MCF 10A (cell line): ENCODE measurements at regions of chr17 and their contacts with region 1.

Region 1: DNA sequence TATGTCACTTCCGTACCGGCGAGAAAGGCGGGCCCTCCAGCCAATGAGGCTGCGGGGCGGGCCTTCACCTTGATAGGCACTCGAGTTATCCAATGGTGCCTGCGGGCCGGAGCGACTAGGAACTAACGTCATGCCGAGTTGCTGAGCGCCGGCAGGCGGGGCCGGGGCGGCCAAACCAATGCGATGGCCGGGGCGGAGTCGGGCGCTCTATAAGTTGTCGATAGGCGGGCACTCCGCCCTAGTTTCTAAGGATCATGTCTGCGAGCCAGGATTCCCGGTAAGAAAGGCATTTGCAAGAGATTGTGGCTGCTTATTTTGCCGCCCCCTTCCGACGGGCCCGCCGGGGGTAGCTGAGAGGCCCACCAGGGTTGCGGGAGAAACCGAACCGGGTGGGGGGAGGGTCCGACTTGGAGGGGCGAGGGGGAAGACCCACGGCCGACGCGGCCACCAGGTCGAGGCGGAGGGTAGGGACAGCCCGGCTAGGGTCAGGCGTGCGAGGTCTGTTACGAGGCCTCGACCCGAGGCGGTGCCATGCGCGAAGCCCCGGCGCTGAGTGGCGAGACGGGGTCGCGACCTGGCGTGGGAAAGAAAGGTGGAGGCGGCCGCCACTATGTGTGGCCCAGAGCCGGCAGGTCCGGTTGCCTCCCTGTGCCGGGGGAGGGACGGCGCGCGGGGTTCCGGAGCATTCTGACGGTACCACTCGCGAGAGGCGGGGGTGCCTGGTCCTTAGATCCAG is 6.7 kb upstream of the CD68 start:
- DNase-seq: peak; percentile 99
- H3K4me3 Mint-ChIP-seq: peak overlapping the region; percentile 90
- H3K27ac Mint-ChIP-seq: peak overlapping the region; percentile 99
- H3K4me1 Mint-ChIP-seq: peaks cover 11% of the 10 kb centered on the region
- H3K27me3 Mint-ChIP-seq: no peaks in the 10 kb centered on the region
- CTCF ChIP-seq: no peak

Region 2: GRCh38 chr17:7583253-7584109 is 10.7 kb after region 1 on chr17 and contains the start of gene MPDU1:
- CTCF ChIA-PET with region 1: interaction called, 59 read pairs
- POLR2A ChIA-PET with region 1: interaction called, 294 read pairs
- intact Hi-C with region 1: loop called (anchors 1 kb)
- DNase-seq: peak; percentile 98
- H3K4me3 Mint-ChIP-seq: peak within 1 kb of the TSS; percentile 93
- H3K27ac Mint-ChIP-seq: peak within 1 kb of the TSS; percentile 100
- H3K4me1 Mint-ChIP-seq: peaks cover 56% of the 10 kb centered on the region
- H3K27me3 Mint-ChIP-seq: no peaks in the 10 kb centered on the region
- CTCF ChIP-seq: no peak
- total RNA-seq, gene MPDU1: 52.0 and 56.5 TPM in 2 replicates